ENCODE measurements at regions of chr6 and their contacts with region 1.

Region 1: DNA sequence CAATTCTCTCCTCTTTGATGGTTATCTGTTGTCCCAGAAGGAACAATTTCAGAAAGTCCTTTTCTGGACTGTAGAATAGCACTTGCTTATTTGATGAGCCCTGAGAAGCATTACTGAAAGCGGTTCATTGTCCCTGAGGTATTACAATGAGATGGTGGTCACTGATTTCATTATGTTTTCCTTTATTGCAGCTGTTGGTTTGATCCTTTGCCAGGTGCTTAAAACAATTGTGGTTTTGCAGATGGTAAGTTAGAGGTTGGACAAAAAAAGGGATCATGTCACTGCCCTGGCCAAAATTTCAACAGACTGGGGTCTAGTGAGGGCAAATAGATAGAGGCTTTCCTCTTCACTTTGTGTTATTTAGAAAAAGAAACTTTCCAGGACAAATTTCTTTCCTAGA is 61.9 kb downstream of the ESR1 start:
- DNase-seq: no peak
- H3K4me3 Mint-ChIP-seq: no peak overlapping the region
- H3K27ac Mint-ChIP-seq: no peak overlapping the region
- H3K4me1 Mint-ChIP-seq: no peaks in the 10 kb centered on the region
- H3K27me3 Mint-ChIP-seq: no peaks in the 10 kb centered on the region

Region 2: DNA sequence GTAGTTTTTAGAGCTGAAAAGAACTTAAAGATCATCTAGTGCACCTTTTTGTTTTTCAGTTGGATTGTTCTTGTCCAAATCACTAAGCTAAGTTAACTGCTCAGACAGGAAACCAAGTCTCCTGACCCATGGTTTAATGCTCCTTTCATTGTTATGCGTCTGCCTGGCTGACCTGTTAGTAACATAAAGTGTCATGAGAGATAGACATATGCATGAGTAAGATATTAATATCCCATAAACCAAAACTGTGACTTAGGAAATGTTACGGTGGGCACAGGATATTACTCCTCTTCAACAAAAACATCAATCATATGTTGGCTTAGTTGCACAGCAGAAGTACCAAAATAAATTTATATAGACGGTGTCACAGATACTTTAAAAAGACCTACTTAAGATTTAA is 22.2 kb after region 1 on chr6:
- CTCF ChIA-PET with region 1: no interaction called
- POLR2A ChIA-PET with region 1: no interaction called
- intact Hi-C with region 1: loop called (anchors 2 kb)
- DNase-seq: no peak
- H3K4me3 Mint-ChIP-seq: no peak overlapping the region
- H3K27ac Mint-ChIP-seq: no peak overlapping the region
- H3K4me1 Mint-ChIP-seq: no peaks in the 10 kb centered on the region
- H3K27me3 Mint-ChIP-seq: no peaks in the 10 kb centered on the region

Region 3: GRCh38 chr6:152034631-152035030 is 165.3 kb after region 1 on chr6:
- CTCF ChIA-PET with region 1: no interaction called
- POLR2A ChIA-PET with region 1: no interaction called
- intact Hi-C with region 1: no loop called
- DNase-seq: no peak
- H3K4me3 Mint-ChIP-seq: no peak overlapping the region
- H3K27ac Mint-ChIP-seq: no peak overlapping the region
- H3K4me1 Mint-ChIP-seq: no peaks in the 10 kb centered on the region
- H3K27me3 Mint-ChIP-seq: no peaks in the 10 kb centered on the region

Measured in activated CD4-positive, alpha-beta memory T cell treated with anti-CD3 and anti-CD28 coated beads for 36 hours (primary cell).